Upper lobe of right lung (tissue), 1 donor: ENCODE measurements at regions of chr16 and their contacts with region 1.

Region 1: GRCh38 chr16:67659648-67660563 is at the start of gene ACD:
- DNase-seq: peak; percentile 95
- ATAC-seq: peak; percentile 91
- H3K4me3 ChIP-seq: peak within 1 kb of the TSS; percentile 81
- H3K27ac ChIP-seq: peak within 1 kb of the TSS; percentile 95
- H3K4me1 ChIP-seq: peaks cover 15% of the 10 kb centered on the region
- H3K27me3 ChIP-seq: peaks cover under 1% of the 10 kb centered on the region
- CTCF ChIP-seq: no peak
- total RNA-seq, gene ACD: 14.3 TPM

Region 2: DNA sequence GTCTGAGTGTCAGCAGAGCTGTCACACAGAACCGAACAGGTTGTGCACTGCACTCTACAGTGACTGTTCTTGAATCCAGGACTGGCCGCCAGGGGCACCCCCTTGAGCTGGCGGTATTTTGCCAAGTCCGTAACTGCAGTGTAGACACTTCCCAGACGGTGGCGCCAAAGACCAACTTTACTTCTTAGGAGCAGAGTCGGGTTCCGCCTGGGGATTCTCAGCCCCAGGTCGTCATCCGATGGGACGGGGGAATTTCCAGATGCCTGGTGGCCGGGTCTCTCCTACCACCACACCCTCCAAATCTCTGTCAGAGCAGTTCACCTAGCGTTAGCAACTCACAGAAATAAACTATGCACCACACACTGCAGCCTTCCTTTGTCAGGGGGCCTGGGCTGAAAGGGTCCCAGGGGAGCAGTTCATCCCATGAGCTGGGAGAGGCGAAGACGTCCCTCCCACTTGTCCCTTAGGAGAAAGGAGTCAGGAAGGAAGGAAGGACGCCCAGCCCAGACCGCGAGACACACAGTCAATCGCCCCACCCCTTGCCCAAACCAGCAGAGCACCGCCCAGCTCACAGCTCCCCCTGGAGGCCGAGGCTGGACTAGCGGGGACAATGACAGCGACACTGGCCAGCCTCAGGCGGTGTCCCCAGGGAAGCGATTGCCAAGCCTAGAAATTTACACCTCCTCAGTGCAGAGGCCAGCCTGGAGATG is 138.7 kb before region 1 on chr16:
- intact Hi-C with region 1: loop called (anchors 10 kb)
- DNase-seq: peak; percentile 95
- ATAC-seq: peak; percentile 96
- H3K4me3 ChIP-seq: peak overlapping the region; percentile 47
- H3K27ac ChIP-seq: peak overlapping the region; percentile 86
- H3K4me1 ChIP-seq: peaks cover 4% of the 10 kb centered on the region
- H3K27me3 ChIP-seq: no peaks in the 10 kb centered on the region
- CTCF ChIP-seq: peak; percentile 75

Region 3: DNA sequence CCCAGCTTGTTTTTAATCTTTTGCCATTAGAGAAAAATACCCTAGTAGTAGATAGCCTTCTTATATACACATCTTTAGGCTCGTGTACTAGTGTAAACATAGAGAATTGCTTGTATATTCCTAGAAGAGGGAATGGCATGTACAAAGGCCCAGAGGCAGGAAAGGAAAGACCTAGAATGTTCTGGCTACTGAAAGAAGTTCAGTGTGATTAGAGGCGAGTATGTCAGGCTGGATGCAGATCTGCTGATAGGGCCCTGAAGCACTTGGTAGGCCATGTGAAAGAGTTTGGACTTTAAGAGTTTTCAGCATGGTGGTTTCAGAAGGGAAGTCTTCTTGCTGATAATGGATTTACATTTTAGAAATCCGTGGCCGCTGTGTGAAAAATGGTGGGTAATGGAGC is 80.2 kb before region 1 on chr16:
- intact Hi-C with region 1: no loop called
- DNase-seq: no peak
- ATAC-seq: no peak
- H3K4me3 ChIP-seq: no peak overlapping the region
- H3K27ac ChIP-seq: no peak overlapping the region
- H3K4me1 ChIP-seq: no peaks in the 10 kb centered on the region
- H3K27me3 ChIP-seq: no peaks in the 10 kb centered on the region
- CTCF ChIP-seq: no peak